Endothelial cell of umbilical vein (primary cell): ENCODE measurements at regions of chr2 and their contacts with region 1.

Region 1: DNA sequence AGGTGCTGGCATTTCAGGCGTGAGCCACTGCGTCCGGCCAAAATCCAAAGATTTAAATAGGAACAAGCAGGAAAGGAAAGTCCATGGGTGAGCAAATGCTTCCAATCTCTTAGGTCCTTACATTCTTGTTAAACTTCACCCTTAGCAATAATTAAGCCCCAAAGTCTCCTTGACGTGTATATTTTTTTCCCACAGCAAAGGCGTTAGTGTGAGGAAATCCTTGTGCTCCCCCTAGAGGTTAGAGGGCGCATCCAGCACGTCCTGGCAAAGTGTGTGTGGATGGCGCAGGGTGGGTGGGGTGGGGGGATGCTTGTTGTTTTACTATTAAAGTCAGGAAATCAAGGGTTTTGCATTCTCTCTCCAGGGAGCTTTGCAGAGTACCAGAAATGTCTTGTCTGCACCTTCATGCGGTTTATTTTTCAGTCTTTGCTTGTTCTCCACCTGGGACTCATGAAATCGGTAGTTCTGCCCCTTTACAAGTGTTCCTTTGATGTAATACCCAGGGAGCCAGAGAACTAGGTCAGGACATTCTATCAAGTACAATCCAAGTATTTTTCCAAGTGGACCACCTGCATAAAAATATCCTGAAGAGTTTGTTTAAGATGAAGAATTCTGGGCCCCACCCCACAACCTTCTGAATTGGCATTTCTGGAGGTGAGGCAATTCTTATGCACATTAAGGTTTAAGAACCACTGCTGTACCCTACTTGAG is 22.2 kb upstream of the ITSN2 start:
- DNase-seq: peak; percentile 66
- H3K4me3 ChIP-seq: no peak overlapping the region
- H3K27ac ChIP-seq: no peak overlapping the region
- H3K4me1 ChIP-seq: no peaks in the 10 kb centered on the region
- H3K27me3 ChIP-seq: no peaks in the 10 kb centered on the region
- CTCF ChIP-seq: peak; percentile 30 to 78
- POLR2A ChIP-seq: no peak

Region 2: GRCh38 chr2:24228470-24228869 is 154.0 kb before region 1 on chr2:
- CTCF ChIA-PET with region 1: interaction called, 6 read pairs
- POLR2A ChIA-PET with region 1: interaction called, 6 read pairs
- dilution Hi-C with region 1: no loop called
- intact Hi-C with region 1: loop called (anchors 1 kb)
- DNase-seq: peak; percentile 39
- H3K4me3 ChIP-seq: no peak overlapping the region
- H3K27ac ChIP-seq: no peak overlapping the region
- H3K4me1 ChIP-seq: no peaks in the 10 kb centered on the region
- H3K27me3 ChIP-seq: no peaks in the 10 kb centered on the region
- CTCF ChIP-seq: peak; percentile 12 to 19
- POLR2A ChIP-seq: no peak

Region 3: DNA sequence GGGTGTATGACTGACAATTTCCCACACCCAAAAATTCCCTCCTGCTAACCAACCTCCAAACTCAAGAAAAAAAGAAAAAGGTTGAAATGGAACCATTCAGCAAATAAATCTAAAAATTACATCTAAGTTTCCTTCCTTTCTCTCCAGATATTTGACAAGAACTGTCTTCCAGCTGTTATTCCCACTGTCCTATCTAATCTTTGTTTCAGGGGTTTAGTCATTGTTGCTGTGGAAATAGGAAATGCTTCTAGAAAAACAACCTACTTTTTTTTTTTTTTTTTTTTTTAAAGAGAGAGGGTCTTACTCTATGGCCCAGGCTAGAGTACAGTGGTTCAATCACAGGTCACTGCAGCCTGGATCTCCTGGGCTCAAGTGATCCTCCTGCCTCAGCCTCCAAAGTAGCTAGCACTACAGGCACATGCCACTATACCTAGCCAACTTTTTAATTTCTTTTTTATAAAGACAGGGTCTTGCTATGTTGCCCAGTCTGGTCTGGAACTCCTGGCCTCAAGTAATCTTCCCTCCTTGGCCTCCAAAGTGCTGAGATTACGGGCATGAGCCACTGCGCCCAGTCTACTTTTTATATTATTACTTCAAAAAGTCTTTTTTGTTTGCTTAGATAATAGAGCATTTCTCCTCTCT is 110.2 kb before region 1 on chr2:
- CTCF ChIA-PET with region 1: no interaction called
- POLR2A ChIA-PET with region 1: no interaction called
- dilution Hi-C with region 1: no loop called
- intact Hi-C with region 1: no loop called
- DNase-seq: peak; percentile 49
- H3K4me3 ChIP-seq: no peak overlapping the region
- H3K27ac ChIP-seq: peak overlapping the region; percentile 53
- H3K4me1 ChIP-seq: peaks cover 18% of the 10 kb centered on the region
- H3K27me3 ChIP-seq: no peaks in the 10 kb centered on the region
- CTCF ChIP-seq: no peak
- POLR2A ChIP-seq: no peak

Region 4: GRCh38 chr2:24315669-24316068 is 66.8 kb before region 1 on chr2:
- CTCF ChIA-PET with region 1: no interaction called
- POLR2A ChIA-PET with region 1: no interaction called
- dilution Hi-C with region 1: no loop called
- intact Hi-C with region 1: loop called (anchors 5 kb)
- DNase-seq: no peak
- H3K4me3 ChIP-seq: no peak overlapping the region
- H3K27ac ChIP-seq: no peak overlapping the region
- H3K4me1 ChIP-seq: peaks cover 3% of the 10 kb centered on the region
- H3K27me3 ChIP-seq: no peaks in the 10 kb centered on the region
- CTCF ChIP-seq: no peak
- POLR2A ChIP-seq: no peak

Region 5: GRCh38 chr2:24421668-24422067 is 39.1 kb after region 1 on chr2:
- CTCF ChIA-PET with region 1: no interaction called
- POLR2A ChIA-PET with region 1: no interaction called
- dilution Hi-C with region 1: no loop called
- intact Hi-C with region 1: no loop called
- DNase-seq: peak; percentile 62
- H3K4me3 ChIP-seq: no peak overlapping the region
- H3K27ac ChIP-seq: no peak overlapping the region
- H3K4me1 ChIP-seq: no peaks in the 10 kb centered on the region
- H3K27me3 ChIP-seq: peaks cover 3 to 5% of the 10 kb centered on the region in 2 experiments
- CTCF ChIP-seq: peak; percentile 48 to 63
- POLR2A ChIP-seq: no peak

Region 6: GRCh38 chr2:24577481-24577880 is 195.0 kb after region 1 on chr2:
- CTCF ChIA-PET with region 1: no interaction called
- POLR2A ChIA-PET with region 1: no interaction called
- dilution Hi-C with region 1: no loop called
- intact Hi-C with region 1: no loop called
- DNase-seq: peak; percentile 55
- H3K4me3 ChIP-seq: no peak overlapping the region
- H3K27ac ChIP-seq: no peak overlapping the region
- H3K4me1 ChIP-seq: peaks cover 9% of the 10 kb centered on the region
- H3K27me3 ChIP-seq: no peaks in the 10 kb centered on the region
- CTCF ChIP-seq: no peak
- POLR2A ChIP-seq: no peak